ENCODE measurements at regions of chr6 and their contacts with region 1.

Region 1: DNA sequence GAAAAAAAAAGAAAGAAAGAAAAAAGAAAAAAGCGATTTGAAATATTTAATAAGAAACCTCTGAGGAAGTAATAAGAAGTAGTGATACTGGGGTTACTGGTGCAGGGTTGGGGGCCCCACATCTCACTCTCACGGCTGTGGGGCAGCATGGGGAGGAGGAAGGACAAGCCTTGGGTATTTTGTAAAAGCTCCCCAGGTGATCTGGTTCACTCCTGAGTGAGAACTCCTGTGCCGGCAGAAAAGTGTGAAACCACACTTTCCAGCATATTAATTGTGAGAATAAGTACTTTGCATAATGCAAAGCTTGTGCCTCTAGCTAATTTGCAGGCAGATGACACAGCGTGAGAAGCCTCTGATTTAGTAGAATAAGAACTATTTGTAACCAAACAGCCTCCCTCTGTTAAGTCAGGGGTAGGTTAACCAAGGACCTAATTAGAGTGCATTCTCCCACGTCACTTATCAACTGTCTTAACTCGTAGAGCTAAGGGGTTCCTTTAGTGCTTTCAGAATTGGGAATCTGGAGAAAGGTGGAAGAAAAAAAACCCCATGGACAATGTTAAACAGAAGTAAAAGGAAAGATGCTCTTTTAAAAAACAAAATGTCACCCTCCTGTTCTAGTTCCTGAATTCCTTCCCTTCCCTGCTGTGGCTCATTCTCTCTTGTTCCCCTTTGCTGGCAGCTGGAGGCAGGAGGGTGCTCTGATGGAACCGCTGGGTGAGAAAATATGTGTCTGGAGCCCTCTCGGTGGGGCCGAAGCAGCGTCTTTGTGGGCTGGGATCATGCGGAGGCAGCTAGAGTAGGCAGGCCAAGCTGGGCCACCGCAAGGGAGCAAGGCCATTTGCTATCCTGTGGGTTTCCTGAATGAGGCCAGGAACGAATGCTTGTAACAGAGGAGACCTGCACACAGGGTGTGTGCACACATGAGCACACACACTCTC is 108.7 kb downstream of the FYN start:
- DNase-seq: peak; percentile 94
- ATAC-seq: peak; percentile 83
- H3K4me3 ChIP-seq: peak overlapping the region; percentile 24; the same call in 1 of the 2 replicates
- H3K27ac ChIP-seq: peak overlapping the region; percentile 93
- H3K4me1 ChIP-seq: peaks cover 88% of the 10 kb centered on the region
- H3K27me3 ChIP-seq: no peaks in the 10 kb centered on the region
- CTCF ChIP-seq: no peak
- EP300 ChIP-seq: peak; percentile 74 to 89; a peak in 2 of 4 replicates
- POLR2A ChIP-seq: no peak; the same call in 1 of the 2 replicates
- RAD21 ChIP-seq: 0 out of 2 replicates have a peak, but pooled peaks have one; percentile 16

Region 2: DNA sequence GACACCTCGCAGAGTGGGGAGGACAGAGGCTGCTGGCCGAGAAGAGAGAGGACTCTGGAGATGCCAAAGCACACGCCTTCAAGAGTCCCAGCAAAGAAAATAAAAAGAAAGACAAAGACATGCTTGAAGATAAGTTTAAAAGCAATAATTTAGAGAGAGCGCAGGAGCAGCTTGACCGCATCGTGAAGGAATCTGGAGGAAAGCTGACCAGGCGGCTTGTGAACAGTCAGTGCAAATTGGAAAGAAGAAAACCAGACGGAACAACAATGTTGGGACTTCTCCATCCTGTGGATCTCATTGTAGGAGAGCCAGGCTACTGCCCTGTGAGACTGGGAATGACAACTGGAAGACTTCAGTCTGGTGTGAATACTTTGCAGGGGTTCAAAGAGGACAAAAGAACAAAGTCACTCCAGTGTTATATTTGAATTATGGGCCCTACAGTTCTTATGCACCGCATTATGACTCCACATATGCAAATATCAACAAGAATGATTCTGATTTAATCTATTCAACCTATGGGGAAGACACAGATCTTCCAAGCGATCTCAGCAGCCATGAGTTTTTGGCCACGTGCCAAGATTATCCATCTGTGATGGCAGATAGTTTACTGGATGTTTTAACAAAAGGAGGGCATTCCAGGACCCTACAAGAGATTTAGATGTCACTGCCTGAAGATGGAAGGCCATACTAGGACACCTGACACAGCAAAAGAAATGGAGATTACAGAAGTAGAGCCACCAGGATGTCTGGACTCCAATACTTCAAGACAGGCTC is 333.7 kb before region 1 on chr6:
- CTCF ChIA-PET with region 1: no interaction called
- POLR2A ChIA-PET with region 1: no interaction called
- RAD21 ChIA-PET with region 1: no interaction called
- SMC1A ChIA-PET with region 1: no interaction called
- in situ Hi-C with region 1: no loop called
- intact Hi-C with region 1: no loop called
- DNase-seq: no peak
- ATAC-seq: no peak
- H3K4me3 ChIP-seq: no peak overlapping the region
- H3K27ac ChIP-seq: no peak overlapping the region
- H3K4me1 ChIP-seq: peaks cover 16% of the 10 kb centered on the region
- H3K27me3 ChIP-seq: no peaks in the 10 kb centered on the region
- CTCF ChIP-seq: no peak
- EP300 ChIP-seq: no peak
- POLR2A ChIP-seq: no peak
- RAD21 ChIP-seq: no peak

Region 3: GRCh38 chr6:111721753-111722154 is 42.8 kb before region 1 on chr6:
- CTCF ChIA-PET with region 1: interaction called, 13 read pairs
- POLR2A ChIA-PET with region 1: interaction called, 8 read pairs
- RAD21 ChIA-PET with region 1: interaction called, 75 read pairs
- SMC1A ChIA-PET with region 1: interaction called, 86 read pairs
- in situ Hi-C with region 1: no loop called
- intact Hi-C with region 1: loop called (anchors 1 kb)
- DNase-seq: no peak
- ATAC-seq: peak; percentile 28
- H3K4me3 ChIP-seq: no peak overlapping the region
- H3K27ac ChIP-seq: no peak overlapping the region
- H3K4me1 ChIP-seq: peaks cover 40% of the 10 kb centered on the region
- H3K27me3 ChIP-seq: no peaks in the 10 kb centered on the region
- CTCF ChIP-seq: peak; percentile 50 to 68 (median 67)
- EP300 ChIP-seq: no peak
- POLR2A ChIP-seq: no peak
- RAD21 ChIP-seq: peak; percentile 75

Region 4: GRCh38 chr6:111743862-111744692 is 20.4 kb before region 1 on chr6:
- CTCF ChIA-PET with region 1: interaction called, 43 read pairs
- POLR2A ChIA-PET with region 1: interaction called, 69 read pairs
- RAD21 ChIA-PET with region 1: interaction called, 158 read pairs
- SMC1A ChIA-PET with region 1: interaction called, 156 read pairs
- in situ Hi-C with region 1: no loop called
- intact Hi-C with region 1: loop called (anchors 1 kb)
- DNase-seq: no peak
- ATAC-seq: no peak
- H3K4me3 ChIP-seq: no peak overlapping the region
- H3K27ac ChIP-seq: no peak overlapping the region
- H3K4me1 ChIP-seq: peaks cover 58% of the 10 kb centered on the region
- H3K27me3 ChIP-seq: no peaks in the 10 kb centered on the region
- CTCF ChIP-seq: no peak
- EP300 ChIP-seq: no peak
- POLR2A ChIP-seq: no peak
- RAD21 ChIP-seq: no peak

Region 5: DNA sequence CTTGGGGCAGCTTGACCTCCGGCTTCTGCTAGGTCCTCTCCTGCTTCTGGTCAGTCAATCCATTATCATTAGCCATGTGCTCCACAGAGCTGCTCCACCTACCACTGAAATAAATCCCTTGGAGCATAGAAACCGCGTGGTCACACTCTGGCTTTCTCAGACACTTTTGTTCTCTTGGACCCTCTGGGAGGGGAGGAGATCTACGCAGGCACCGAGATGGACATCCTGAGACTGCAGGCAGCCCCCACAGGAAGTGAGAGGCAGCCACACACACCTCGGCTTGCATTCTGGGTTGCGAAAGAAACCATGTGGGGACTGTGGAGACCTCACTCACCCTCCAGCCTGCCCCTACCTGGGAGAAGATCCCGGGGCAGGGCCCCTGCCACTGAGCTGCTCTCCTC is 29.2 kb after region 1 on chr6:
- CTCF ChIA-PET with region 1: interaction called, 9 read pairs
- POLR2A ChIA-PET with region 1: interaction called, 21 read pairs
- RAD21 ChIA-PET with region 1: interaction called, 37 read pairs
- SMC1A ChIA-PET with region 1: interaction called, 48 read pairs
- in situ Hi-C with region 1: no loop called
- intact Hi-C with region 1: loop called (anchors 2 kb)
- DNase-seq: no peak
- ATAC-seq: peak; percentile 82
- H3K4me3 ChIP-seq: peak overlapping the region; percentile 66
- H3K27ac ChIP-seq: peak overlapping the region; percentile 85
- H3K4me1 ChIP-seq: peaks cover 36% of the 10 kb centered on the region
- H3K27me3 ChIP-seq: no peaks in the 10 kb centered on the region
- CTCF ChIP-seq: no peak
- EP300 ChIP-seq: no peak
- POLR2A ChIP-seq: peak; percentile 56
- RAD21 ChIP-seq: no peak

Region 6: DNA sequence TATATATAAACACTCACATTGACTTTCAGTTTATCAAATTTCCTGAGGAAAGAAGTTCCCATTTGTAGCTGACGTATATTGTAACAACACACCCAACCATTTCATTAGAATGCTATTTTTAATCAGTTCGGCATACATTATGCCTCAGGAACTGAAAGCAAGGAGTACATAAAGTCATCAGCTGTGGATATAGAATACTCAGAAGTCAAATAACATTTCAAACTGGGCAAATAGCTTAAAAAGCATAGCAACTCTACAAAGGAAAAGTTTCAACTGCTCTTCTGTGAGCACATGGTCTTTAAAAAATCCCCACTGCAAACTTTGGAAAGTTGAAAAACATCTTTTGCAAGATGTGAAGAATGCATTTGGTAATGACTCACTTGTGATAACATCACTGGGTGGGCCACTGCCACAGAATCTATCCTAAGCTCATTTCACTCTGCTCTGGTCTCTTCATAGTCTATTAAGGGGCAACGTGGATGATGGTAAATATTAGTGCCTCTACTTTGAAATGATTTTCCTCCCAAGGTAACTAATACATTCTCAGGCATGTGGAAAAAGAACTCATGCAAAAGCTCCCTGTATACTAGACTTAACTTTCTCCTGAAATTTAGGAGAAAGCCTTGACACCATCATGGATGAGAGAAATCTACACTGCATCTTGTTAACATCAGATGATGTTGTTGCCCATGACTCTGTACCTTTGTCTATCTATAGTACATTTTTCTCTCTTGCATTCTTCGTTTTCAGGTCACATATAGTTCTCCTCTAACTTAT is 59.5 kb after region 1 on chr6:
- CTCF ChIA-PET with region 1: interaction called, 3 read pairs
- POLR2A ChIA-PET with region 1: no interaction called
- RAD21 ChIA-PET with region 1: interaction called, 10 read pairs
- SMC1A ChIA-PET with region 1: interaction called, 18 read pairs
- in situ Hi-C with region 1: no loop called
- intact Hi-C with region 1: no loop called
- DNase-seq: no peak
- ATAC-seq: peak; percentile 73
- H3K4me3 ChIP-seq: peak overlapping the region; percentile 45
- H3K27ac ChIP-seq: peak overlapping the region; percentile 57
- H3K4me1 ChIP-seq: peaks cover 32% of the 10 kb centered on the region
- H3K27me3 ChIP-seq: no peaks in the 10 kb centered on the region
- CTCF ChIP-seq: no peak
- EP300 ChIP-seq: no peak
- POLR2A ChIP-seq: no peak
- RAD21 ChIP-seq: no peak

Region 7: DNA sequence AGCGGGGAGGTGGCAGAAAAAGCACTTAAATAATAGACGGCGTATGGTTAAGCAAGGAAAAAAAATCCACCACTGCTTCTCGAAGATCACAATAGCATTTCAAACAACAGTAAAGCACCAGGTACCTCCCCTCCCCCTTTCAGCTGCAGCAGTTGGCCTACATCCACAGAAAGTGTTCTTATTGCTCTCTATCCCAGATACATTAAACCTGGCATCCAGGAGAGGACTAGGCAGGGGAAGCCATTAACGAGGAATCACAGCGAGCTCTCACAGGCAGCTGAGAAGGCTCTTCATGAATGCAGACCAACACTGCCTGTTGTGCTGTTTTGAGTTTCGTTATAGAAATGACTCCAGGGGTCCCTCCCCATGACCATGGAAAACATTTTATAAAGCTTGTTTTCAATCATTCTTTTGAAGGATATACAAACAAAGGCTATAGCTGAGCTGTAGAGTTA is 97.0 kb after region 1 on chr6:
- CTCF ChIA-PET with region 1: no interaction called
- POLR2A ChIA-PET with region 1: interaction called, 7 read pairs
- RAD21 ChIA-PET with region 1: interaction called, 11 read pairs
- SMC1A ChIA-PET with region 1: interaction called, 8 read pairs
- in situ Hi-C with region 1: no loop called
- intact Hi-C with region 1: no loop called
- DNase-seq: no peak
- ATAC-seq: no peak
- H3K4me3 ChIP-seq: no peak overlapping the region
- H3K27ac ChIP-seq: no peak overlapping the region
- H3K4me1 ChIP-seq: peaks cover 21% of the 10 kb centered on the region
- H3K27me3 ChIP-seq: no peaks in the 10 kb centered on the region
- CTCF ChIP-seq: no peak
- EP300 ChIP-seq: no peak
- POLR2A ChIP-seq: no peak
- RAD21 ChIP-seq: no peak

Region 8: DNA sequence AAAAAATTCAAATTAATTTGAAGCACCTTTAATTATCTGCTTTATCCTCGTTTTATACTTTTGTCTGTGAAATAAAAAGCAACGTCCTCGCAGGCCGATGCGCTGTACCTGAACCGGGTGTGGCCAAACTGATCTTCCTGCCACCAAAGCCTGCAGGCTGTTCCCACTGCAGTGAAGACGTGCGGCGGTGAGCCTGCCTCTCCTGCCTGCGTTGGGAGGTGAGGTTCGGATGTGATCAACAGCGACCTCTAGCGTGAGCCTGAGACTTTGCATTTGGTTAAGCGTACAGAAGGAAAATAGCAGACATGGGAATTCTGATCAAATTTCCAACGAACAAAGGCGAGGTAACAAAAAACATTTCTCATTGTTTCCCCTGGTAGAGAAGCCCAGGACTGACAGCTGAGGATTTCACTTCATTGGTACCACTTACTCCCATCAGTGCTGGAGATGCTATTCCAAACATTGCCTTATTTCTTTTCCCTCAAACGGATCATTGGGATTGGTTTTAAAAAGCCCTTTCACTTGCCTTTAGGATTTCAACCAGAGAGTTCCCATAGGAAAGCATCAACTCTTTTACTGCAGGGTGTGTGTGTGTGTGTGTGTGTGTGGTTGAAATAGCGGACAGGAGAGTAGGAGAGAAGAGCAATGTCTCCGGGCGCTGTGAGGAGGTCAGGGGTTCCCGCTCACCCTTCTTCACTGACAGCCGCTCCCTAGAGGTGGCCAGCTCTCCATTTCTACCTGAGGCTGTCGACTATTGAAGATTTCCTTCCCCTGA is 232.8 kb after region 1 on chr6:
- CTCF ChIA-PET with region 1: interaction called, 10 read pairs
- POLR2A ChIA-PET with region 1: interaction called, 9 read pairs
- RAD21 ChIA-PET with region 1: interaction called, 7 read pairs
- SMC1A ChIA-PET with region 1: interaction called, 8 read pairs
- in situ Hi-C with region 1: no loop called
- intact Hi-C with region 1: no loop called
- DNase-seq: no peak
- ATAC-seq: peak; percentile 85
- H3K4me3 ChIP-seq: no peak overlapping the region
- H3K27ac ChIP-seq: no peak overlapping the region
- H3K4me1 ChIP-seq: peaks cover 28% of the 10 kb centered on the region
- H3K27me3 ChIP-seq: no peaks in the 10 kb centered on the region
- CTCF ChIP-seq: peak; percentile 85 to 95 (median 93); a peak in 5 of 6 replicates
- EP300 ChIP-seq: no peak
- POLR2A ChIP-seq: no peak
- RAD21 ChIP-seq: peak; percentile 99

Measured in GM12878 (cell line).